ENCODE measurements at regions of chr21 and their contacts with region 1.

Region 1: GRCh38 chr21:36661511-36662309 is 37.2 kb upstream of the SIM2 start:
- DNase-seq: no peak
- ATAC-seq: peak; percentile 85
- H3K4me3 ChIP-seq: no peak overlapping the region
- H3K27ac ChIP-seq: no peak overlapping the region
- H3K4me1 ChIP-seq: no peaks in the 10 kb centered on the region; the same call in 1 of the 2 replicates
- H3K27me3 ChIP-seq: no peaks in the 10 kb centered on the region
- CTCF ChIP-seq: peak; percentile 78

Region 2: DNA sequence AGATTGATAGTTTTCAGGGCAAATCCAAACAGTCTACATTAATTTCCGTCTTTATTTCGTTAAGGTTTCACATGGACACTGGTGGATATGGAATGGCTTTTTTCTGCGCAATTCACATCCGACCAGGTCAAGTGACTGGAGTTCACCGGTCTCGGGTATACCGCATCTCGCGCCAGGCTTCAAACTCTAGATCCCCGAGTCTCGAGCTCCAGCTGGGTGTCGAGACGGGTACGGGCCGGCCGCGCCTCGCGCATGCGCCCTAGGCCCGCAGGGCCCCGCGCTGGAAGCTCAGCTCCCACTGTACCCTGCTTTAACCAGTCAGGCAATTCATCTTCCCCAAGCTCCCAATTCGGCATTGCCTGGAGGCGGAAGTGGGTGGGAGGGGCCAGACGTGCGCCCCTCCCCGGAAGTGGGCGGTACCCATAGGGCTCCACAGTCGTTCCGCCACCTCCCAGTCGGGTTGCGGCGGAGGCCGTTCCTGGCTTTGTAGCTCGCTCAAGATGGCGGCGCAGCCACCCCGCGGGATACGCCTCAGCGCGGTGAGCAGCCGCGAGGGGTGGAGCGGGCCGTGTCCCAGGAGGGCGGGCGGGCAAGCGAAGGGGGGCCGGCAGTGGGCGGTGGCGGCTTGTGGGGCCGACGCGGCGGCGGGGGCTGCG is 341.8 kb before region 1 on chr21 and contains the start of gene MORC3:
- CTCF ChIA-PET with region 1: no interaction called
- POLR2A ChIA-PET with region 1: no interaction called
- in situ Hi-C with region 1: no loop called
- intact Hi-C with region 1: no loop called
- DNase-seq: peak; percentile 95
- ATAC-seq: peak; percentile 94
- H3K4me3 ChIP-seq: peak within 1 kb of the TSS; percentile 76 to 88
- H3K27ac ChIP-seq: peak within 1 kb of the TSS; percentile 84
- H3K4me1 ChIP-seq: peaks cover 7% of the 10 kb centered on the region; the same call in 1 of the 2 replicates
- H3K27me3 ChIP-seq: no peaks in the 10 kb centered on the region
- CTCF ChIP-seq: no peak
- total RNA-seq, gene MORC3: 16.8 TPM

Region 3: DNA sequence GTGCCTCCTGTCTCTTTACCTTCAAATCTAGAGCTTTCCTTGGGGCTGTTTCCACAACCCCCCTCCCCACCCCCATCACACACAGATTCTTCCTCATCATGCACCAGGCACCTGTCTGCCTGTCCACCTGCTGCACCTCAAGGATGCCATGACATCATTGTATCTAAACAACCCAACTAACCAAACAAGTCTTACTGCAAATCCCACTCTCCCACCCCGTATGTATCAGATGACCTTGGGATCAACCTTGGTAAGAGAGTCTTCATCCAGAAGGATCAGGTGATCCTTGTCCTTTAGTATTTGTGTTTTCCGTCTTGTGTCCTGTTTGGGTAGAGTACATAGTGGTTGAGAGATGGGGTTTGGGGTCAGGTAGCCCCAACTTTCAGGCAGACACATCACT is 65.5 kb before region 1 on chr21:
- CTCF ChIA-PET with region 1: no interaction called
- POLR2A ChIA-PET with region 1: no interaction called
- in situ Hi-C with region 1: no loop called
- intact Hi-C with region 1: no loop called
- DNase-seq: no peak
- ATAC-seq: no peak
- H3K4me3 ChIP-seq: no peak overlapping the region
- H3K27ac ChIP-seq: no peak overlapping the region
- H3K4me1 ChIP-seq: no peaks in the 10 kb centered on the region
- H3K27me3 ChIP-seq: no peaks in the 10 kb centered on the region; the same call in none of the 2 replicates
- CTCF ChIP-seq: no peak

Region 4: GRCh38 chr21:36615274-36615964 is 46.3 kb before region 1 on chr21:
- CTCF ChIA-PET with region 1: no interaction called
- POLR2A ChIA-PET with region 1: no interaction called
- in situ Hi-C with region 1: no loop called
- intact Hi-C with region 1: no loop called
- DNase-seq: no peak
- ATAC-seq: no peak
- H3K4me3 ChIP-seq: no peak overlapping the region
- H3K27ac ChIP-seq: no peak overlapping the region
- H3K4me1 ChIP-seq: no peaks in the 10 kb centered on the region
- H3K27me3 ChIP-seq: peaks cover 11% of the 10 kb centered on the region
- CTCF ChIP-seq: peak; percentile 45

Region 5: DNA sequence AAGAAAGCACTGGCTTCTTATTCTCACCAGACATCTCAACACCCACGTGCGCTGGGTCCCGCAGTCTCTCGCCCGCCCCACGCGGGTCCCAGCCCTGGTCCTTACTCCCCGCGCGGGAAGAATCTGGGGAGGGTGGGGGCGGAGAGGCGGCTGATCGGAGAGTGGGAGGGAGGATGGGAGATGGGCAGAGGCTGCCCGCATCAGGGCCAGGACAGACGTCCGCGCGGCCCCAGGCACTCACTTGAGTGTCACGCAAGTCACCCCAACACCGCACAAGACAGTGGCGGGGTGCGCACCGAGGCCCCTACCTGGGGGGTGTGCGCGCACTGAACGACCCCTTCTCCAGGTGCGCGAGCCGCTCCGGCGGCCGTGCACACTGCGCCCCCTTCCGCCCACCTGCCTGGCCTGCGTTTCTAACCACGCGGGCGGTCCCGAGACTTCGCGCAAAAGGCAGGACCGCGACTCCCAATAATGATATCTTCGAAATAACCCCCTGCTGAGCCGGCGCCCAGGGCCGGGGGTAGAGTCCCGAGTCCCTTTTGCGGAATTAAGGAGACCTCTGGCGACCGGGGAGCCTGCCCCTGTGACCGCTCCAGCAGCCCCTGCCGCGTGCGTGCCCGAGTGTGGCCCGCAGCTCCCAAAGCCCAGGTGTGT is 31.3 kb after region 1 on chr21:
- CTCF ChIA-PET with region 1: interaction called, 10 read pairs
- POLR2A ChIA-PET with region 1: interaction called, 4 read pairs
- in situ Hi-C with region 1: no loop called
- intact Hi-C with region 1: no loop called
- DNase-seq: no peak
- ATAC-seq: no peak
- H3K4me3 ChIP-seq: no peak overlapping the region
- H3K27ac ChIP-seq: no peak overlapping the region
- H3K4me1 ChIP-seq: no peaks in the 10 kb centered on the region; the same call in 1 of the 2 replicates
- H3K27me3 ChIP-seq: no peaks in the 10 kb centered on the region
- CTCF ChIP-seq: no peak

Region 6: DNA sequence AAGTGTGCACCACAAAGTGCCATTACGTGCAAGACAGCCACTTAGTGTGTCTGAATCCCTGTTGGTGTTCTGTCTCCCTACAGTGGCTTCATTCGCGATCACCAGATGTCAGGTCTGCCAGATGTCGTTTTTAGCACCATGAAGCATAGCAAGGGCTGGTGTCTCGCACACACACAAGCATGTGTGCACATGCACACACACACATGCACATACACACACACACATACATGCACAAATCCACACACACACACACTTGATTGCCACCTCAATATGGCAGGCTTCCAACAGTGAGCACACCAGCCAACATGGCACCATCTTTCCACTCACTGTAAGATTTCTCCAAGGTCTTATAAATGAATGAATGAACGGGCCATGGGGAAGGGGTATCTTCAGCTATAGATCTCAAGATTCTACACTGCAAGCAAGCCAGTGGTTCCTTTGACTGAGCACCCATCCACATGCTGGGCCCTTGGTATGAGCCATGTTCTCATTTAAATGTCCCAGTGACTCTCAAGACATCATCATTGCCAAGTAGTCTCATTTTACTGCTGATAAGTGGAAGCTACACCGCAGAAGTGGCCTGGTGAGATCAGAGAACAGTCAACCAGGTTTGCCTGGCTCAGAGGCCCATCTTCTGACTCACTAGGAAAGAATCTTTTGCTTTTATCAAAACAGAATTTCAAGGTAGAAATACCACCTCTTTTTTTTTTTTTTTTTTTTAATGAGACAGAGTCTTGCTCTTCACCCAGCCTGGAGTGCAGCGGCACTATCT is 122.1 kb after region 1 on chr21:
- CTCF ChIA-PET with region 1: interaction called, 10 read pairs
- POLR2A ChIA-PET with region 1: no interaction called
- in situ Hi-C with region 1: no loop called
- intact Hi-C with region 1: no loop called
- DNase-seq: no peak
- ATAC-seq: no peak
- H3K4me3 ChIP-seq: no peak overlapping the region
- H3K27ac ChIP-seq: no peak overlapping the region
- H3K4me1 ChIP-seq: peaks cover 11% of the 10 kb centered on the region; the same call in 1 of the 2 replicates
- H3K27me3 ChIP-seq: no peaks in the 10 kb centered on the region
- CTCF ChIP-seq: no peak

Region 7: GRCh38 chr21:37319551-37319950 is 657.8 kb after region 1 on chr21:
- CTCF ChIA-PET with region 1: no interaction called
- POLR2A ChIA-PET with region 1: no interaction called
- in situ Hi-C with region 1: no loop called
- intact Hi-C with region 1: no loop called
- DNase-seq: no peak
- ATAC-seq: no peak
- H3K4me3 ChIP-seq: no peak overlapping the region
- H3K27ac ChIP-seq: no peak overlapping the region
- H3K4me1 ChIP-seq: no peaks in the 10 kb centered on the region
- H3K27me3 ChIP-seq: no peaks in the 10 kb centered on the region
- CTCF ChIP-seq: no peak

Region 8: DNA sequence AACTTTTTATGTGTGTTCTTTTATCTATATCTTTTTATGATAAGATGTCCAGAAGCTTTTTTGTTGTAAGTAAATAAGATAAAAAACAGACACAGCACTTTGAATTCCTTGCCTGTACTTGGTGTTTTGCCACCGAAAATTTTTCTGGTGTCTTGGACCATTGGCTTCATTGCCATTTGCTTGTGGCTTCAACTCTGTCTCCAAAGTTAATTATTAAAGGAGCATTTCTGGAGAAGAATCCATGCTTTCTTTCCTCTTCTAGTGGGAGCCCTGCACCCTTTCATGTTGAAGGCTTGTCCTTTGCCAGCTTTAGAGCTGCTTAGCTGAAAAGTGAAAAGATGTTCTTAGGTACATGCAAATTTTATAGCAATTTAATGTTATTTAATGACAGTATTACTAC is 817.1 kb after region 1 on chr21:
- CTCF ChIA-PET with region 1: interaction called, 18 read pairs
- POLR2A ChIA-PET with region 1: no interaction called
- in situ Hi-C with region 1: no loop called
- intact Hi-C with region 1: no loop called
- DNase-seq: no peak
- ATAC-seq: no peak
- H3K4me3 ChIP-seq: no peak overlapping the region
- H3K27ac ChIP-seq: no peak overlapping the region
- H3K4me1 ChIP-seq: peaks cover 6% of the 10 kb centered on the region
- H3K27me3 ChIP-seq: no peaks in the 10 kb centered on the region
- CTCF ChIP-seq: no peak